AG04449 (cell line): ENCODE measurements at regions of chr15 and their contacts with region 1.

Region 1: DNA sequence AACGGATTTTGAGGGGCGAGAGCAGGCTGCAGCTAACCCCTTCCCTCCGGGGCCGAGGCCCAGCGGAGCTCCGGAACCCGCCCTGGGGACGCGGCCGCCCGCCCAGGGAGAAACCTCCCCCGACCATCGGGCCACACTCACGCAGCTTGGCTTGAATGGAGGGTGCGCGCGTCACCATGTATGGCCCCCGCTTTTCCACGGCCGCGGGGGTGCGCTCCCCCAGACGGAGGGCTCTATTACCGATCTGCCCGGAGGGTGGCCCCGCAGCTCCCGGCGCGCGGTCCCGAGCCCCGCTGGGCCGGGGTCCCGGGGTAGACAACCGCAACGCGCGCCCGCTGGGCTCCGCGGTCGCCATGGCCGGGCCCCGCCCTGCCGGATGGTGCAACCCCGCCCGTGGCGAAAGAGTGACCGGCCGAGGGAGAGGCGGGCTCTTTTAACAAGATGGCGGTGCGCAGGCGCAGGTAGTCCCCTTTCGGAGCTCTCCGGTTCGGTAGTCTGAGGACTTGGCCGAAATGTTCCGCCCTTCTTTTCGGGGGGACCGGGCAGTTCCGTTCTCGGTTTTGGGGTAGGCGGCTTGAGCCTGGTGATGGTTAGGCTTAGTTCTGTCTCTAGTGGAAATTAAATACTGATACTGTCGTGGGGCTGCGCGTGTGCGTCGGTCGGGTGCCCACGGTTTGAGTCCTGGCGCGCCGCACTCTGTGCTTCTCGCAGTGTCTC is at the start of gene FAM219B:
- DNase-seq: no peak
- H3K4me3 ChIP-seq: peak within 1 kb of the TSS; percentile 73
- CTCF ChIP-seq: no peak

Region 2: GRCh38 chr15:74787251-74788041 is 119.2 kb before region 1 on chr15:
- CTCF ChIA-PET with region 1: interaction called, 21 read pairs
- POLR2A ChIA-PET with region 1: interaction called, 3 read pairs
- DNase-seq: no peak
- H3K4me3 ChIP-seq: no peak overlapping the region
- CTCF ChIP-seq: peak; percentile 81

Region 3: GRCh38 chr15:74857082-74857655 is 49.4 kb before region 1 on chr15:
- CTCF ChIA-PET with region 1: interaction called, 10 read pairs
- POLR2A ChIA-PET with region 1: no interaction called
- DNase-seq: no peak
- H3K4me3 ChIP-seq: no peak overlapping the region
- CTCF ChIP-seq: no peak

Region 4: DNA sequence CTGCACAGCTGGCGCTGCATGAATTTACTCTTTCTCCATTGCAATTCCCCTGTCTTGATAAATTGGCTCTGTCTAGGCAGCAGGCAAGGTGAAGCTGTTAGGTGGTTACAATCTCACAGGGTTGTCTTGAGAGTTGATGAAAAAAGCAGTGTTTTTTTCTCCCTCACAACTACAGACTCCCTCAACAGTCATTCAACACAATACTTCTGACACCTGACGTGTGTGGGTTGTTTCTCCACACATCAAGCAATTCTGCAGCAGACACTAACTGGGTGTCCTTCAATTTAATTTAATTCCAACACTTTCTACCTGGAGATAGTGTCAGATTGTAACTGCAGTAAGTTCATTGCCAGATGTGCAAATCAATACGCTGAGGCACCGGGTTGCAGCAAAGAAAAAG is 28.3 kb before region 1 on chr15:
- CTCF ChIA-PET with region 1: interaction called, 29 read pairs
- POLR2A ChIA-PET with region 1: no interaction called
- DNase-seq: no peak
- H3K4me3 ChIP-seq: no peak overlapping the region
- CTCF ChIP-seq: no peak

Region 5: GRCh38 chr15:74889883-74890664 is 16.5 kb before region 1 on chr15 and contains the start of gene MPI:
- CTCF ChIA-PET with region 1: interaction called, 134 read pairs
- POLR2A ChIA-PET with region 1: interaction called, 13 read pairs
- DNase-seq: no peak
- H3K4me3 ChIP-seq: peak within 1 kb of the TSS; percentile 100
- CTCF ChIP-seq: no peak

Region 6: GRCh38 chr15:74950078-74951000 is 43.7 kb after region 1 on chr15:
- CTCF ChIA-PET with region 1: interaction called, 38 read pairs
- POLR2A ChIA-PET with region 1: no interaction called
- DNase-seq: no peak
- H3K4me3 ChIP-seq: no peak overlapping the region
- CTCF ChIP-seq: peak; percentile 93